ENCODE measurements at regions of chr20 and their contacts with region 1.

Region 1: DNA sequence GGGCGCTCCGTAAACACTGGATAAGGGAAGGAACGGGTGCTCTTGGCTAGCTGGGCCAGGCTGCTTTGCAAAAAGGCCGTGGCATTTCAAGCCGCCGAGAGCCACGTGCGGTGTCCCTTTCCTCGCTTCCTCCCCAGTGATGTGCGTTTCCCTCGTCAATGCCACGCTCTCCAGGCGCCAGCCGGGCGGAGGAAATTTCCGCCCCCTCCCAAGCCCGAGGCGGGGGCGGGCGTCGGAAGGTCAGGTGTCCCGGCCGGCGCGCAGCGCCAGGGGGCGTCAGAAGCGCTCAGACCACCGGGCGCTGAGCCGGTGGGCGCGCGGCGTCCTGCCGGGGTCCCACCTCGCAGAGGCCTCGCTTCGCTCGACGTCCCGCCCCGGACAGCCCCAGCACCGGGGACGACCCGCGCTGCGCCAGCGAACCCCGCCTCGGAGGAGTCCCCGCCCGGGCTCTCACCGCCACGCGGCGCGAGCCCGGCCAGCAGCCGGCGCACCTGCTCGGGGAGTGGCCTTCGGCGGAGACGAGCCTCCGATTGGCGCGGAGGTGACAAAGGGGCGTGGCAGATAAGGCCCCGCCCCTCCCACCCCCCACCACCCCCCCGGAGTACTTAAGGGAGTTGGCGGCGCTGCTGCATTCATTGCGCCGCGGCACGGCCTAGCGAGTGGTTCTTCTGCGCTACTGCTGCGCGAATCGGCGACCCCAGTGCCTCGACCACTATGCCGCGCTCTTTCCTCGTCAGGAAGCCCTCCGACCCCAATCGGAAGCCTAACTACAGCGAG is at the start of gene SNAI1:
- DNase-seq: peak; percentile 72
- H3K4me3 ChIP-seq: peak within 1 kb of the TSS; percentile 70
- H3K27ac ChIP-seq: peak within 1 kb of the TSS; percentile 76
- H3K4me1 ChIP-seq: peaks cover 67% of the 10 kb centered on the region
- H3K27me3 ChIP-seq: no peaks in the 10 kb centered on the region
- CTCF ChIP-seq: peak; percentile 74
- total RNA-seq, gene SNAI1: 0.69 TPM

Region 2: DNA sequence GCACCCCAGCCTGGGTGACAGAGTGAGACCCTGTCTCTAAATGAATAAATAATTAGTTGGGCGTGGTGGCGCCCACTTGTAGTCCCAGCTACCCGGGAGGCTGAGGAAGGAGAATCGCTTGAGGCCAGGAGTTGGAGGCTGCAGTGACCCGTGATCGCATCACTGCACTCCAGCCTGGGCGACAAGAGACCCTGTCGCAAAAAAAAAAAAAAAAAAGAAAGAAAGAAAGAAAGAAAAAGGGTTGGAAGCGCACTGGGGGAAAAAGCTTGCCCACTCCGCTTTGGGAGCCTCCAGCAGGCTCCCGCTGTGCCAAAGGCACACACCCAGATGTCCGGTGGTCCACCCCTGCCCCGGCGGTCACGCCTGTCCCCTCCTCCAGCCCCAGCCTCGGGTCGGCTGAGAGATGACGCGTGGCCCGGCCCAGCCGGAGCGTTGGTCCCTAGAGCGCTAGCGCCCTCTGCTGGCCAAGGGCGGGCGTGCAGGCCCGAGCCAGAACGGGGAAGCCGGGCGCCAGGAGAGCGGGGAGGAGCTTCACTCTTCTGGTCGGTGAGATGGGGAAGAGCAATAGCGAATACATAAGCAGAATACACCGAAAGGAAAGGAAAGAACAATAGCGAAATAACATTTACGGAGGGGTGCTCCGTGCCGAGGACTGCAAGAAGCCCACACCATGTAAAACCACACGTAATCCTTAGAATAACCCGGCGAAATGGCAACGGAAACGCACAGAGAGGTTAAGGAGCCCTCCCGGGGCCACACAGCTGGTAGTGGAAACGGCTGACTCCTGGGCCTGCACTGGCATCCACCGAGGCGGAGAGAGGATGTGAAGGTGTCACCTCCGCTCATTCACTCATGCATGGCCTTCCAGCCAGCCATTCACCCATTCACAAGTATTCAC is 88.7 kb after region 1 on chr20:
- intact Hi-C with region 1: loop called (anchors 2 kb)
- DNase-seq: peak; percentile 89
- H3K4me3 ChIP-seq: peak overlapping the region; percentile 59
- H3K27ac ChIP-seq: no peak overlapping the region
- H3K4me1 ChIP-seq: peaks cover 23% of the 10 kb centered on the region
- H3K27me3 ChIP-seq: no peaks in the 10 kb centered on the region
- CTCF ChIP-seq: peak; percentile 100

Region 3: DNA sequence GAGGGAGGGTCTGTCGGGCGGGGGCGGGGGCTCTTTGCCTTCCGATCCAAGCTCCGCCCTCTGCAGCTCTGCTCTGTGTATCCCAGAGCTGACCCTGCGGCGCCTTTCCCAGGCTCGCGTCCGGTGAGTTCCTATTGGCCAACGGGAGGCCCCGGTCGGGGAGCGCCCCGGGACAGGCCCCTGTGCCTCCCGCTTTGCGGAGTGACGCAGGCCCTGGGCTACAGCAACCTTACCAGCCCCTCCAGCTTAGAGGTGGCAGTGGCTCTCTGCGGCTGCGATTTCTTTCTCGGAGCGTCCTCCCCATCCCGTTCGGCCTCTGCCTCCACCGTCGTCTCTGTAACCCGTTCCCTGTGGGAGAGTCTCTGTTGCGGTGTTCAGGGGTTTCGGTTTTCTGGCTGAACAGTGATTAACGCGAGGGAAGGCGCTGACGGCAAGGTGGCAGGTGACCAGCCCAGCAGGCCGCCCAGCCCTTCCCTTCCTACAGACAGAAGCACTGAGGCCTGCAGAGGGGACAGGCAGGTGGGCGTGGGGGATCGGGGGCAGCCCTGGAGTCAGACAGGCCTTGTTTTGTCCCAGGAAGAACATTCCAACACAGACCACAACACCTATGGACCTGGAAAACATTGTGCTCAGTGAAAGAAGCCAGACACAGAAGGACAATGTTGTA is 189.9 kb after region 1 on chr20:
- intact Hi-C with region 1: loop called (anchors 10 kb)
- DNase-seq: peak; percentile 92
- H3K4me3 ChIP-seq: peak overlapping the region; percentile 81
- H3K27ac ChIP-seq: peak overlapping the region; percentile 92
- H3K4me1 ChIP-seq: peaks cover 38% of the 10 kb centered on the region
- H3K27me3 ChIP-seq: no peaks in the 10 kb centered on the region
- CTCF ChIP-seq: no peak

Measured in left ventricle myocardium inferior (tissue), 1 donor.